ENCODE measurements at regions of chr11 and their contacts with region 1.

Region 1: DNA sequence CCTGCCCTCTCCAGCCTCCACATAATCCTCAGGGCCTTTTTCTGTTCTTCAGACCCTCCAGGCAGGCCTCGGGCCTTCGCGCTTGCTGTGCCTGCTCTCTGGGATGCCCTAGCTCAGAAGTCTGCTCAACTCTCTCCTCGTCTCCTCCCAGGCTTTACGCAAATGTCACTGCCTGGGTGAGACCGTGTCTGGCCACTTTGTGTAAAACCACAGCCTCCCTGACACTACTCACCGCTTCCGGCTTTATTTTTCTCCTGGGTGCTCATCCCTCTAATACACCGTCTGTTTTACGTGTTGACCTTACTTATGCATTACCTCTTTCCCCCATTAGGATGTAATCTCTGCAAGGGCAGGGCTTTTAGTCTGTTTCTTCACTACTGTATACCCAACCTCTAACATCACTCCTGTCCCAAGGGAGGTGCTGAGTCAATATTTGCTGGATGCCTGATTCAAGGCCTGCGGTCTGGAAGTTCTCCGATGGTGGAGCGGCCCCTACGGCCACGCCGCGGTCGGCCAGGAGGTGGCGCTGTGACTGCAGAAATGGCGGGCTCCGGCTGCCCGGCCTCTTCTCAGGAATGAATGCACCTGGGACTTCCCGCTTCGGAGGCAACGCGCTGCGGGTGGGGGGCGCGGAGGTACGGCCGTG is 58.2 kb upstream of the THY1 start:
- ATAC-seq: peak; percentile 78 to 92 (median 87)
- H3K4me3 ChIP-seq: no peak overlapping the region
- H3K27ac ChIP-seq: no peak overlapping the region
- H3K4me1 ChIP-seq: peaks cover 15% of the 10 kb centered on the region in 2 donors

Region 2: DNA sequence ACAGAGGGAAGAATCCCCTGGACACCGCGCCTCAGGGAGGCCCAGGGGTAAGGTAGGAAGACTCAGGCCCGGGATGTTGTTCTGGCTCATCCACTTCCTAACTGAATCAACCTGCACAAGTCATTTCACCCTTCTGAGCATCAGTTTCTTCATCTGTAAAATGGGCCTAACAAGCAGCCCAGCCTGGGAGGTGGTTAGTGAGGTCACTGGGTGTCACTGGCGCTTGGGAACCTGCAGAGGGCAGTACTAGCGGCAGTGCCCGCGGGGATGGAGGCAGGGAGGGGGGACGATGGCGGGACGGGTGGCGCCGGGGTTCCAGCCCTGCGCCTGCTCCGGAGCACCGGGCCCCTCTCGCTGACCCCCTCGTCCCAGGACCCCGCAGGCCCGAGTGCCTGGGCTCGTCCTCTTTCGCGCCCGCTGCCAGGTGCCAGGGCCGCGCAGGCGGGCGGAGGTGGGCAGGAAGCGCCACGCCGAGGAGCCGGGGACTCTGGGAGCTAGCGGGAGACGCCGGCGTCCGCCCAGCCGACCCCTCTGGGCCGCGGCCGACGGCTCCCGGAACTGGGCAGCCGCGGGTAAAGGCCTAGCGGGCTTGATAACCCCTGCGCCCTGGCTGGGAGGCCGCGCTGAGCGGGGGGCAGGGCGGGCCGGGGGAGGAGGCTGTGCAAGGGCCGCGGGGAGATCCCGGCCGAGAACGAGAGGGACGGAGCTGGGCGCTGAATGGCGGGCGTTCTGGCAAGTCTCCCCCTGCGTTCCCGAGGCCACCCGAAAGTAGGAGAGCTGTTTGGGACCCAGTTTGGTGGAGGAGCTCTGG is 312.5 kb before region 1 on chr11 and contains the start of gene NLRX1:
- in situ Hi-C with region 1: no loop called
- ATAC-seq: peak; percentile 76 to 88 (median 81)
- H3K4me3 ChIP-seq: peak within 1 kb of the TSS; percentile 27 to 53 (median 34)
- H3K27ac ChIP-seq: peak within 1 kb of the TSS in 1 of 2 donors; percentile 2
- H3K4me1 ChIP-seq: peaks cover 0 to 3% of the 10 kb centered on the region in 2 donors
- total RNA-seq, gene NLRX1: 0.65 to 16.3 (median 2.3) TPM

Region 3: DNA sequence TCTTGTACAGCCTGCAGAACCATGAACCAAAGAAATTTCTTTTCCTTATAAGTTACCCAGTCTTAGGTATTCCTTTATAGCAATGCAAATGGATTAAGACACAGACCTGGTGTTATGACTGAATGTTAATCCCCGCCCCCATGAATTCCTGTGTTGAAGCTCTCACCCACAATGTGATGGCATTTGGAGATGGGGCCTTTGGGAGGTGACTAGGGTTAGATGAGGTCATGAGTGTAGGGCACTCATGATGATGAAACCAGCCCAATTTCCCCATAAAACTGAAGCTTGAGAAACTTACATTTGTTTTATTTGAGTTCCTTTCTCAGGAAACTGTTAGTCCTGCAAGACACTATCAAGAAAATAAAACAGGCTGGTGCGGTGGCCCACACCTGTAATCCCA is 57.6 kb after region 1 on chr11:
- in situ Hi-C with region 1: loop called in 1 of 9 experiments (anchors 5 kb)
- ATAC-seq: no peak
- H3K4me3 ChIP-seq: no peak overlapping the region
- H3K27ac ChIP-seq: no peak overlapping the region
- H3K4me1 ChIP-seq: peaks cover 8% of the 10 kb centered on the region in 2 donors

Region 4: GRCh38 chr11:119712459-119713358 is 231.6 kb after region 1 on chr11:
- in situ Hi-C with region 1: no loop called
- ATAC-seq: no peak
- H3K4me3 ChIP-seq: no peak overlapping the region
- H3K27ac ChIP-seq: no peak overlapping the region
- H3K4me1 ChIP-seq: peaks cover 86 to 90% of the 10 kb centered on the region in 2 donors

Region 5: DNA sequence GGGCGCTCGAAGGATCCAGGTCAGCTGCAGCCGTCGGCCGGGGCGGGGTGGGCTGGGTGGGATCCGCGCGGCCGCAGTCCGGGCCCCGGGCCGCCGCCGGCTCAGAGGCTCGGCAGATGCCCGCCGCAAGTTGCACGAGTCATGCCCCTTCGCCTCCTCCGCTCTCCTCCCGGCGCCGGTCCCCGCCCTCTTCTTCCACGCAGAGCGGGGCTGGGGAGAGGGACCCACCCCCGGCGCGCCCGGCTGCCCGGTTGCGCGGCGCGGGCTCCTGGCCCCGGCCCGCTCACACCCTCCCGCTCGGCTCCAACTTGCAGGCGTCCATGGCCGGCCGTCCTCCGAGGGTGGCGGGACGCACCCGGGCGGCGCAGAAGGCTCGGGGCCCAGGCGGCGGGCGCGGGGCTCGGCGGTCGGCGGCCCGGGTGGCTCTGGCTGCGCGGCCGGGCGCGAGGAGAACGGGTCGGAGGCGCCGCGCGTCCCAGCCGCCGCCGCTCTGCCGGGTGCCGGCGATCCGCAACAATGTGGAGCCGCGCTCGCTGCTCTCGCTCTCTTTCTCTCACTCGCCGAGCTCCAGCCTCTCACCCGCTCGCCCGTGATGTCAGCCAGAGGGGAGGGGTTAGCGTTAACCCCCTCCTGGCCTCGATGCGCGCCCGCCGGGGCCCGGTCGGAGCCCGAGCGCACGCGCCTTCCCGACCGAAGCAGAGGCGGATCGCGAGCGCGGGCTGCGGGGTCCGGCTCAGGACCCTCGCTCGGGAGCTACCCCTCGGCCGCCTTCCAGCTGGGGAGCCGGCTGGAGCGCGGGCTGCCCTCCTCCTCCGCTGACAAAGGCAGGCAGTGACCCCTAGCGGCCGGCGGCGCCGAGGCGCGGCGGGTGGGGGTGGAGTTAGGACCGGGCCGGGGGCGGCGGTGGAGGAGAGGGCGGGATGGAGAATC is 247.8 kb after region 1 on chr11 and contains the start of gene NECTIN1:
- in situ Hi-C with region 1: loop called in 1 of 9 experiments (anchors 25 kb)
- ATAC-seq: peak; percentile 80 to 88 (median 84)
- H3K4me3 ChIP-seq: peak within 1 kb of the TSS; percentile 60 to 91 (median 88)
- H3K27ac ChIP-seq: peak within 1 kb of the TSS; percentile 86 to 89
- H3K4me1 ChIP-seq: peaks cover 24 to 31% of the 10 kb centered on the region in 2 donors
- total RNA-seq, gene NECTIN1: 7.2 to 35.9 (median 19.1) TPM

Region 6: DNA sequence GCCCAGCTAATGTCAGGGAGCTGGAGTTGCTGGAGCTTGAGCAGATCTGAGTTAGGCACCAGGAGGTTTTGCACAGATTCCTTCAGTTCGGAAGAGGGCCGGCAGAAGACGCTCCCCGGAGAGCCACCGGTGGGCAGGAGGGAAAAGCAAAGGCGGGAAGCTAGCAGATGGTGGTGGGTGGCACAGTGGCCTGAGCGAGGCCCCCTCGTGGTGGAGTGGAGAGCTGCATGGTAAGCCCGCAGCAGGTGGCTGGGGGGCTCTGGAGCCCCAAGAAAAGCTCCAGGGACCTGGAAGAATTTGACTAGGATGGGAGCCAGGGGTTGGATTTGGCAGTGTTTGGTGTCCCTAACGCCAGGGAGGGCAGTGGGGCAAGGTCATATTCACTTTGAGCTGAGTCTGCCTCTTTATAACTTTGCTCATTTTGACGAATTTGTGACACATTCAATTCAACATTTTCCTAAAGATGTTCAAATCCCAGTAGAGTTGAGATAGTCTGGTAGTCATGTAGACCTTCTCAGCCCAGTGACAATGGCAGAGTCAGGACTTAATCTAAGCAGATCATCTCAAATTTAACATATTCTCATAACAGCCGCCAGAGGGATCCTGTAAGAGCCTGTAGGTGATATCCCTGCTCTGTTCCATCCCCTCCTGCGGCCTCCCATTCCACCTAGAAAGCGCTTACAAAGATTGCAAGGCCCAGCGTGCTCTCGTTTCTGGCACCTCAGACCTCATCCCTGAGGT is 598.8 kb after region 1 on chr11:
- in situ Hi-C with region 1: loop called in 1 of 9 experiments (anchors 25 kb)
- ATAC-seq: peak in 2 of 8 experiments; percentile 44 to 49
- H3K4me3 ChIP-seq: no peak overlapping the region
- H3K27ac ChIP-seq: no peak overlapping the region
- H3K4me1 ChIP-seq: peaks cover 6 to 13% of the 10 kb centered on the region in 2 donors